Right ventricle myocardium inferior (tissue), 1 donor: ENCODE measurements at regions of chr5 and their contacts with region 1.

Region 1: GRCh38 chr5:180868960-180869359 is 7.9 kb upstream of the ZFP62 start:
- DNase-seq: peak; percentile 86
- ATAC-seq: peak; percentile 63

Region 2: GRCh38 chr5:180784497-180785097 is 84.4 kb before region 1 on chr5:
- intact Hi-C with region 1: loop called (anchors 1 kb)
- DNase-seq: no peak
- ATAC-seq: peak; percentile 83

Region 3: GRCh38 chr5:181052672-181053487 is 183.9 kb after region 1 on chr5:
- intact Hi-C with region 1: loop called (anchors 5 kb)
- DNase-seq: peak; percentile 72
- ATAC-seq: no peak